ENCODE measurements at regions of chr15 and their contacts with region 1.

Region 1: GRCh38 chr15:40104865-40105516 is 3.7 kb downstream of the BMF start:
- DNase-seq: peak; percentile 69

Region 2: GRCh38 chr15:40044717-40045571 is 60.0 kb before region 1 on chr15:
- CTCF ChIA-PET with region 1: interaction called, 34 read pairs
- POLR2A ChIA-PET with region 1: interaction called, 9 read pairs
- DNase-seq: peak; percentile 75

Region 3: GRCh38 chr15:40092256-40092978 is 12.6 kb before region 1 on chr15:
- CTCF ChIA-PET with region 1: interaction called, 16 read pairs
- POLR2A ChIA-PET with region 1: interaction called, 32 read pairs
- DNase-seq: no peak

Region 4: DNA sequence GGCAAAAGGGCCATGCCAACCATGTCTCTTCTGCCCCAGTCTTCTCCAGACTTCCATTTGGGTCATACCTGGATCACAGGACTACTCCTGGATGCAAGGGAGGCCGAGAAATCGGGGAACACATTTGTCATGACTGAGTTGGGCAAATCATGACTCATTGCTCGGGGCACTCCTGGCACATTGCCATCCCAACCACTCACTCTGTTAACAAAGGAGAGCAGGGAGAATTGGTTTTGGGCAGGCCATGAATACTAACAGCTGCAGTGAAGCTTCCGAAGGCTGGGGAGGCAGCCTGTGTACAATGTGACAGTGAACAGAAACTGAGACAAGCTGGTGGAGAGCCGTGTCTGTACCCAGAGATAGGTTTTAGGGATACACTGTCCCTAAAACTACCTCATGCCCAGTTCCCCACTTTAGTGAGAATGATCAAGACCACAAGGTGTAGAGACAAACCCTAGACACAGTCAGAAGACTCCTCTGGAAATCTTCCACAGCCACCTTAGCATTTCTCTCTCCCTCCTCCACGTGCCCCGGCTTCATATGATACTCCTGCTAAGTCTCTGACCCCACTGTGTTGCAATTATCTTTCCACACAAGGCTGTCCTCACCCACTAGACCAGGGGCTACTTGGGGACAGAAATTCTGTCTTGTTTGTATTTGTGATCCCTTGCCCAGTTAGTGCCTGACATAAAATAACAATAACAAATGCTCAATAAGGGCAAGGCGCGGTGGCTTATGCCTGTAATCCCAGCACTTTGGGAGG is 45.4 kb after region 1 on chr15:
- CTCF ChIA-PET with region 1: no interaction called
- POLR2A ChIA-PET with region 1: no interaction called
- DNase-seq: no peak

Region 5: DNA sequence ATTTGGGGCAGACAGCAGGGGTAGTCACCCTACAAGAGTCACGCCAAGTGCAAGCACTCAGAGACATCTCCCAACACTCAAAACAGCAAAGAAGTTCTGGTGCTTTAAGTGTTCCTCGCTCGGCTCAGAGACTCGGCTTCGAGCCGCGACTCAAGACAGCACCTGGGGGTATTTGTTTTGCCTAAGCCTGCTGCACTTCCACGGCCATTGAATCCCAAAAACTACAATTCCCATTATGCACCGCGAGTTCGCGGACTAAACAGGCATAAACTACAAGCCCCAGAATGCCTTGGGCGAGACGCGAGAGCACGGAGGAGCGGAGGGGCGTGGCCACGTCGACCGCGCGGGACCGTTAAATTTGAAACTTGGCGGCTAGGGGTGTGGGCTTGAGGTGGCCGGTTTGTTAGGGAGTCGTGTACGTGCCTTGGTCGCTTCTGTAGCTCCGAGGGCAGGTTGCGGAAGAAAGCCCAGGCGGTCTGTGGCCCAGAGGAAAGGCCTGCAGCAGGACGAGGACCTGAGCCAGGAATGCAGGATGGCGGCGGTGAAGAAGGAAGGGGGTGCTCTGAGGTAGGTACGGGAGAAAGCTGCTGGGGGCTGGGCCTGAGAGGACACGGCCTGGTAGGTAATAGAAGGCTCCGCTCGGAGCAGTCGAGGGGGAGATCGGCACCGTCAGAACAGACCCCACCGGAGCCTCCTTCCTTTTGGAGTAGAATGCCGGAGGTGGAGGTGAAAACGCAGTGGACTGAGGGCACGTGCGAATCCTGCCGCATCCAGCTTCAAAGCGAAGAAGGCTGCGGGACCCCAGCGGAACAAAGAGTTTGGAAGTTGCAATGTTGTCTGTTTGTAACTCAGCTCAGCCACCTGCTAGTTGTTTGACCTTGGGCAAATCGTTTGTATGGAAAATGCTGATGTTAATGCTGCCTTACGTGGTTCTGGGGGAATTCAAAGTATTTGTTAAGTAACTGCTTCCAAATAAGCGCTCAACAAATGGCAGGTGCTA is 56.0 kb after region 1 on chr15 and contains the start of gene BUB1B:
- CTCF ChIA-PET with region 1: interaction called, 3 read pairs
- POLR2A ChIA-PET with region 1: interaction called, 13 read pairs
- DNase-seq: peak; percentile 91

Measured in HEK293T (cell line).